HCT116 (cell line): ENCODE measurements at regions of chr2 and their contacts with region 1.

Region 1: GRCh38 chr2:119011162-119011909 is 69.3 kb downstream of the MARCO start:
- DNase-seq: peak; percentile 16
- ATAC-seq: peak; percentile 95
- H3K4me3 ChIP-seq: peak overlapping the region in 1 of 2 experiments; percentile 10; a peak in 1 of 4 replicates
- H3K27ac ChIP-seq: no peak overlapping the region
- H3K4me1 ChIP-seq: no peaks in the 10 kb centered on the region; a peak in 1 of 4 replicates
- H3K27me3 ChIP-seq: peaks cover 18% of the 10 kb centered on the region; the same call in 1 of the 2 replicates
- CTCF ChIP-seq: peak; percentile 59 to 74 (median 64)
- POLR2A ChIP-seq: no peak
- RAD21 ChIP-seq: peak; percentile 83

Region 2: GRCh38 chr2:118882709-118883210 is 128.6 kb before region 1 on chr2:
- CTCF ChIA-PET with region 1: interaction called, 46 read pairs
- POLR2A ChIA-PET with region 1: no interaction called
- RAD21 ChIA-PET with region 1: interaction called in 1 of 2 experiments, 3 read pairs
- intact Hi-C with region 1: loop called (anchors 2 kb)
- DNase-seq: peak; percentile 57
- ATAC-seq: peak; percentile 78
- H3K4me3 ChIP-seq: peak overlapping the region; percentile 29 to 49
- H3K27ac ChIP-seq: no peak overlapping the region
- H3K4me1 ChIP-seq: peaks cover 0 to 4% of the 10 kb centered on the region in 2 experiments; a peak in 2 of 4 replicates
- H3K27me3 ChIP-seq: peaks cover 12% of the 10 kb centered on the region; the same call in 1 of the 2 replicates
- CTCF ChIP-seq: peak; percentile 84 to 99 (median 97)
- POLR2A ChIP-seq: no peak
- RAD21 ChIP-seq: peak; percentile 91

Region 3: DNA sequence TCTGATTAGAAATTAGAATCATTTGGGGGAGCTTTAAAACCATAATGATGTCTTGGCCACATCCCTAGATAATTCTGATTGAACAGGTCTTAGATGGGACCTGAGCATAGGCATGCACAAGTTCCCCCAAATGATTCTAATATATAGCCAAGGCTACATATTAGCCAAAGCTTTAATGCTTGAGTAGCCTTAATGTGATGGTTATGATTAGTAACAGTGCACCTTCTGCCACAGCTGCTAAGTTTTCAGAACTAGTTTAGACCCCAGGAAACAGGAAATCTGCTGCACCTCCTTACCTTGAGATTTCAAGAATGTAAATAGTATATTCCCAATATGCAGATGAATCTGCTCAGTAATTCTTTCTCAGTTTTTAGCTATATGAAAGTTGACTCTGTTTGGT is 868.2 kb after region 1 on chr2:
- CTCF ChIA-PET with region 1: no interaction called
- POLR2A ChIA-PET with region 1: no interaction called
- RAD21 ChIA-PET with region 1: no interaction called
- intact Hi-C with region 1: no loop called
- DNase-seq: no peak
- ATAC-seq: no peak
- H3K4me3 ChIP-seq: no peak overlapping the region
- H3K27ac ChIP-seq: no peak overlapping the region
- H3K4me1 ChIP-seq: 0 out of 4 replicates have a peak, but pooled peaks cover 0 to 3% of the 10 kb centered on the region in 2 experiments
- H3K27me3 ChIP-seq: no peaks in the 10 kb centered on the region
- CTCF ChIP-seq: no peak
- POLR2A ChIP-seq: no peak
- RAD21 ChIP-seq: no peak